GM23248 (cell line): ENCODE measurements at regions of chr1 and their contacts with region 1.

Region 1: GRCh38 chr1:173409613-173410012 is 67.5 kb upstream of the PRDX6 start:
- DNase-seq: peak; percentile 81
- H3K4me3 ChIP-seq: no peak overlapping the region
- H3K27ac ChIP-seq: no peak overlapping the region
- H3K4me1 ChIP-seq: peaks cover 56% of the 10 kb centered on the region
- H3K27me3 ChIP-seq: no peaks in the 10 kb centered on the region

Region 2: GRCh38 chr1:172826096-172826743 is 583.4 kb before region 1 on chr1:
- in situ Hi-C with region 1: loop called (anchors 10 kb)
- DNase-seq: peak; percentile 92
- H3K4me3 ChIP-seq: peak overlapping the region; percentile 36
- H3K27ac ChIP-seq: peak overlapping the region; percentile 59
- H3K4me1 ChIP-seq: peaks cover 40% of the 10 kb centered on the region
- H3K27me3 ChIP-seq: no peaks in the 10 kb centered on the region

Region 3: GRCh38 chr1:173255214-173255813 is 154.3 kb before region 1 on chr1:
- in situ Hi-C with region 1: loop called (anchors 10 kb)
- DNase-seq: peak; percentile 58
- H3K4me3 ChIP-seq: no peak overlapping the region
- H3K27ac ChIP-seq: no peak overlapping the region
- H3K4me1 ChIP-seq: peaks cover 23% of the 10 kb centered on the region
- H3K27me3 ChIP-seq: no peaks in the 10 kb centered on the region

Region 4: GRCh38 chr1:173682176-173682575 is 272.6 kb after region 1 on chr1:
- in situ Hi-C with region 1: no loop called
- DNase-seq: no peak
- H3K4me3 ChIP-seq: no peak overlapping the region
- H3K27ac ChIP-seq: no peak overlapping the region
- H3K4me1 ChIP-seq: no peaks in the 10 kb centered on the region
- H3K27me3 ChIP-seq: no peaks in the 10 kb centered on the region